ENCODE measurements at regions of chr19 and their contacts with region 1.

Region 1: DNA sequence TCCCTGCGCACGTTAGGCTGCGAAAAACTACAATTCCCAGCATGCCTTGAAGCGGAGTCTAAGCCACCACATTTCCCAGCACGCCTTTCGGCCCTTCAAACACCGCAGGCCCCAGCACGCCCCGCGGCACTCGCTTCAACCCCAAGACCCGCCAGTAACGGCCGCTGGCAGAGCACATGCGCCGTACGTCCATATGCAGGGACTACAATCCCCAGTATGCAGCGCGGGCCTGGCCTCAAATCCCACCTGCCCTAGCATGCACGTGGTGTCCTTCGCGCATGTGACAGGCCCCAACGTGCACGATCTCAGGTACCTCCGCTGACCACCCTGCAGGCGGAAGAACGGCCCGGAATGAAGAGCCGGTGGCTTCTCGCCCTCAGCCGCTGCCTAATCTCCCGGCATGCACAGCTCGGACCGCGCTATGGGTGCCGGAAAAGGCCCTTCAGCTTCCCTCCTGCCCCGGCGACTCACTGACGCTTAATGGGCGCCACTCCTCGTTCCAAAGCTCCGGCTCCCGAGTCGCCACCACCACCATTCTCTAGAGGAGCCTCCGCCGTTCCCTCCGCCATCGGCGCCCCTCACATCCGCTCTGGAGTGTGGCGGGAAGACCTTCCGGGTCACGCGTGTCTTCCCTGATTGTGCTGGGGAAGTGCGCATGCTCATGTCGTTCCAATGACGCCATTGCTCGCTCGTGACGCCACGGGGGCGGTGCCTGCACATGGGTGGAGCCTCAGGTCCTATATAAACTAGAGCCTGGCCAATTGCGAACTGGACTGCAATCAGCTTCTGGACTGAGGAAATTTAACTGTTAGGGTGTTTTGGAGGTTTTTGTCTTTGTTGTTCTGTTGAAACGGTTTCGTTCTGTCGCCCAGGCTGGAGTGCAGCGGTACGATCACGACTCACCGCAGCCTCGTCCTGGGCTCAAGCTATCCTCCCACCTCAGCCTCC is at the start of gene DUS3L:
- DNase-seq: peak; percentile 95
- H3K4me3 Mint-ChIP-seq: peak within 1 kb of the TSS; percentile 98
- H3K27ac Mint-ChIP-seq: peak within 1 kb of the TSS; percentile 100
- H3K4me1 Mint-ChIP-seq: peaks cover 5% of the 10 kb centered on the region
- H3K27me3 Mint-ChIP-seq: no peaks in the 10 kb centered on the region
- total RNA-seq, gene DUS3L: 85.9 and 87.1 TPM in 2 replicates

Region 2: DNA sequence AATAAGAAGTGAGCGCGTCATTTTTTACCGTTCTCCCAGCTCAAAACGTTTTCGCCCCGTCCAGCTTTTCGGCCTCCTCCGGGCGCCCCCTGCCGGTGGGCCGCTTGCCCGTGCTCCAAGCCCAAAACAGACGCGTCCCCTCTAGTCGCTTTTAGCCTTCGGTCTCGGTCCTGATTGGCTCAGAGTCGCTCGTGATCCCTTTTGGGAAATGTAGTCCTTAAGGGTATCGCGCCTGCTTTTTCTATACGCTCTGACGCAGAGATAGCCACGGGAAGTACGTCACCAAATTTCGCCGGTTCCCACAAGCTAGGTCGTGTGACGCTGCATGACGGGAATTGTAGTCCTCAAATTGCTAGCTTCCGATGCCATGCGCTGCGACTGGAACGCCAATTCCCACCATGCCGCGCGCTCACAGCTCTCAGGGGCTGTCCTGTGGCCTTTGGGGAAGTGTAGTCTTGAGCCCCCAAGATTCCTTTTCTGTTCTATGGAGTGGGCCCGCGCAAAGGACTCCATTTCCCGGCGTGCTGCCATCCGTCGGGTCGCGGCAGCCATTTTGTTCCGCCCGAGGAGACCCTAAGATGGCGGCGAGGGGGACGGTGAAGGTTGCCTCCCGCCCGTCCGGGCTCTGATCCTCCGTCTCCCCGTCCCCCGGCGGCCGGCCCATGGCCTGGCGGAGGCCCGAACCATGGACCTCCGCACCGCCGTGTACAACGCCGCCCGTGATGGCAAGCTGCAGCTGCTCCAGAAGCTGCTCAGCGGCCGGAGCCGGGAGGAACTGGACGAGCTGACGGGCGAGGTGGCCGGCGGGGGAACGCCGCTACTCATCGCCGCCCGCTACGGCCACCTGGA is 999.5 kb before region 1 on chr19 and contains the start of gene FEM1A:
- intact Hi-C with region 1: loop called (anchors 1 kb)
- DNase-seq: peak; percentile 98
- H3K4me3 Mint-ChIP-seq: peak within 1 kb of the TSS; percentile 89
- H3K27ac Mint-ChIP-seq: peak within 1 kb of the TSS; percentile 88
- H3K4me1 Mint-ChIP-seq: peaks cover 9% of the 10 kb centered on the region
- H3K27me3 Mint-ChIP-seq: no peaks in the 10 kb centered on the region
- total RNA-seq, gene FEM1A: 23.8 and 24.8 TPM in 2 replicates

Region 3: GRCh38 chr19:5680437-5681368 is 110.1 kb before region 1 on chr19 and contains the starts of genes HSD11B1L and MICOS13:
- intact Hi-C with region 1: loop called (anchors 1 kb)
- DNase-seq: peak; percentile 97
- H3K4me3 Mint-ChIP-seq: peak within 1 kb of the TSS; percentile 99
- H3K27ac Mint-ChIP-seq: peak within 1 kb of the TSS; percentile 94
- H3K4me1 Mint-ChIP-seq: peaks cover 19% of the 10 kb centered on the region
- H3K27me3 Mint-ChIP-seq: peaks cover 3% of the 10 kb centered on the region
- total RNA-seq, gene HSD11B1L: 1.9 TPM in 2 replicates
- total RNA-seq, gene MICOS13: 57.4 and 60.6 TPM in 2 replicates

Region 4: DNA sequence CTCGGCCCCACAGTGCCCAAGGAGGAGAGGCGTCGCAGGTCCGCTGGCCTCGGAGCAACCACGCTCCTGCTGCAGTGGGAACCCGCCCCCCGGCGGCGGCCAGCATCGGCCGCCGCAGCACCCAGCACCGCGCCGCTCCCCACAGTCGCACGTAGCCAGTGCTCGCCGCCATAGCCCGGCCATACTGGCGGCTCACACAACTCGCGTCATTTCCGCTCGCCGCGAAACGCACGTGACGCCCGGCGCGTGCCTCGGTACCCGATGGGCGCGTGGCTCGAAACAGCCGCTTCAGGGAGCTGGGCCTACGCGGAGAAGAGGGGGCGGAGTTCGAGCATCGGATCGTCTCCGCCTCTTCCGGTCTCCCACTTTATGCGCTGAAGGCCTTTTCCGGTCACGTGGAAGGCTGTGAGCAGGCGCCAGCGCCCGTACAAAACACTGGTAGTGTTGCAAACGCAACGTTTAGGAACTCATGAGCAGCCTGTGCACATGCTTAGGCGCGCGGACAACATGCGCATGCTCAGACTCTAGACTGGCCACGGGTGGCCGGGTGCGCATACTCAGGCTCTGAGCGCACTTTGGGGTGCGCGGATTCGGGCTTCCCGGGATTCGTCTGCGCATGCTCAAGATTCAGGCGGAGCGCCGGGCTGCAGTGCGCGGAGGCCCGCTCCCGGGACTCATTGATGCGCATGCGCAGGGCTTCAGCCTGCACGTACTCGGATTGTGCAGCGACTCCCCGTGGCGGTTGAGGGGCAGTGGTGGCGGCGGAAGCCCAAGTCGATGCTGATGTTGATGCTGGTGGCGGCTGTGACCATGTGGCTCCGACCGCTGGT is 70.7 kb before region 1 on chr19 and contains the starts of genes CATSPERD and LONP1:
- intact Hi-C with region 1: loop called (anchors 1 kb)
- DNase-seq: peak; percentile 98
- H3K4me3 Mint-ChIP-seq: peak within 1 kb of the TSS; percentile 98
- H3K27ac Mint-ChIP-seq: peak within 1 kb of the TSS; percentile 96
- H3K4me1 Mint-ChIP-seq: peaks cover 25% of the 10 kb centered on the region
- H3K27me3 Mint-ChIP-seq: peaks cover 6% of the 10 kb centered on the region
- total RNA-seq, gene CATSPERD: not detected in 2 replicates
- total RNA-seq, gene LONP1: 180 and 186 TPM in 2 replicates

Region 5: GRCh38 chr19:5827891-5828660 is 37.2 kb after region 1 on chr19:
- intact Hi-C with region 1: loop called (anchors 1 kb)
- DNase-seq: peak; percentile 96
- H3K4me3 Mint-ChIP-seq: peak overlapping the region; percentile 99
- H3K27ac Mint-ChIP-seq: peak overlapping the region; percentile 99
- H3K4me1 Mint-ChIP-seq: peaks cover 13% of the 10 kb centered on the region
- H3K27me3 Mint-ChIP-seq: peaks cover 2% of the 10 kb centered on the region

Region 6: DNA sequence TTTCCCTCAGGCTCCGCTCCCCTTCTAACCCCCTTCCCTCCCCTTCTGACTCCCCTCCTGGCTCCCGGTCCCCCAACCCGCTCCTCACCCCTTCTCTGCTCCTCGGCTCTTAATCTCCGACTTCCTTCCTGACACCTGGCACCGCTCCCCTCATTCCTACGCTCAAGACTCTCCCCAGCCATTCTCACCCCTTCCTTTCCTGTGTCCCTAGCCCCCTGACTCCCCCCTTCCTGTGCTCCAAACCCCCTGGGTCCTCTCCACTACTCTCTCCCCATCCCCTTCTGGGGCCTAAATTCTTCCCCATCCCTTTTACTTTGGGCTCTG is 571.1 kb after region 1 on chr19:
- intact Hi-C with region 1: loop called (anchors 1 kb)
- DNase-seq: no peak
- H3K4me3 Mint-ChIP-seq: peak overlapping the region; percentile 98
- H3K27ac Mint-ChIP-seq: peak overlapping the region; percentile 96
- H3K4me1 Mint-ChIP-seq: peaks cover 13% of the 10 kb centered on the region
- H3K27me3 Mint-ChIP-seq: no peaks in the 10 kb centered on the region